GM10248 (cell line): ENCODE measurements at regions of chr17 and their contacts with region 1.

Region 1: GRCh38 chr17:63798572-63799106 is 24.7 kb downstream of the DDX42 start:
- DNase-seq: no peak
- CTCF ChIP-seq: no peak

Region 2: GRCh38 chr17:63816669-63817068 is 18.0 kb after region 1 on chr17:
- CTCF ChIA-PET with region 1: interaction called, 10 read pairs
- POLR2A ChIA-PET with region 1: no interaction called
- DNase-seq: peak; percentile 1
- CTCF ChIP-seq: no peak